Activated naive CD8-positive, alpha-beta T cell treated with anti-CD3 and anti-CD28 coated beads, Interleukin-2, amount 10 ng/mL, durations not matched to agents 7 days and 5 days (primary cell): ENCODE measurements at regions of chr7 and their contacts with region 1.

Region 1: DNA sequence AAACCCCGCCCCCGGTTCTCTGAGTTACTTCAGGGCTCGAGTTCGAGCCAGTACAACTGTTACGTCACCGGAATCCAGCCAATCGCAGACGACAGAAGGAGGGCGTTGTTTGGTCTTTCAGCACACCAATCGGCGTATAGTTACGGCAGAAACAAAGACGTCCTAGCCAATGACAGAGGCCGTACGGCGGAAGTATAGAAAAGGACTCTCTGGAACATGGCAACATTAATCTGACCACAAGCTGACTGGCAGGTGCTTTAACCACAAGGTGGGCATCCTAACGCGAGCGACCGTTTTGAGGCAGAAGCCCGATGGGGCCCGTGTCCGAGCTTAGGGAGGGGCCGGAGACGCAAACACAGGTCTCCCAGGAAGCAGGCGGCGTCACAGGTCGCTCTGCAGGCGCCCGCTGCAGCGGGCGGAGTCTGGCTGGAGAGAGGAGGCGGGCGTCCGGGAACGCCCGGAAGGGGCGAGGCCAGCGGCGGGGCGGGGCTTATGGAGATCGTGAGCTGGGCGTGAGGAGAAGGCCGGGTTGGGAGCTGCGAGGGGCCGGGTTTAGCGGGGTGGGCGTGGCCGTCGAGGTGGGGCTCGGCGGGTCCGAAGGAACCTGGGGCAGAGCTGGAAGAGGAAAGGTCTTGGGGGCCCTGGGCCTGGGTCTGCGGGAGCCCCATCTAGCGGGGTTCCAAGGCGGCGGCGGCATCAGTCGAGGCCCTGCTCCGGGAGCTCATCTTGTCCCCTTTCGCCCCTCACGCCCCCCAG is at the start of gene MOSPD3:
- DNase-seq: peak; percentile 100
- ATAC-seq: peak; percentile 93
- H3K4me3 Mint-ChIP-seq: peak within 1 kb of the TSS; percentile 98
- H3K27ac Mint-ChIP-seq: peak within 1 kb of the TSS; percentile 100
- H3K4me1 Mint-ChIP-seq: peaks cover 19% of the 10 kb centered on the region
- H3K27me3 Mint-ChIP-seq: peaks cover 7% of the 10 kb centered on the region
- total RNA-seq, gene MOSPD3: 27.4 TPM

Region 2: DNA sequence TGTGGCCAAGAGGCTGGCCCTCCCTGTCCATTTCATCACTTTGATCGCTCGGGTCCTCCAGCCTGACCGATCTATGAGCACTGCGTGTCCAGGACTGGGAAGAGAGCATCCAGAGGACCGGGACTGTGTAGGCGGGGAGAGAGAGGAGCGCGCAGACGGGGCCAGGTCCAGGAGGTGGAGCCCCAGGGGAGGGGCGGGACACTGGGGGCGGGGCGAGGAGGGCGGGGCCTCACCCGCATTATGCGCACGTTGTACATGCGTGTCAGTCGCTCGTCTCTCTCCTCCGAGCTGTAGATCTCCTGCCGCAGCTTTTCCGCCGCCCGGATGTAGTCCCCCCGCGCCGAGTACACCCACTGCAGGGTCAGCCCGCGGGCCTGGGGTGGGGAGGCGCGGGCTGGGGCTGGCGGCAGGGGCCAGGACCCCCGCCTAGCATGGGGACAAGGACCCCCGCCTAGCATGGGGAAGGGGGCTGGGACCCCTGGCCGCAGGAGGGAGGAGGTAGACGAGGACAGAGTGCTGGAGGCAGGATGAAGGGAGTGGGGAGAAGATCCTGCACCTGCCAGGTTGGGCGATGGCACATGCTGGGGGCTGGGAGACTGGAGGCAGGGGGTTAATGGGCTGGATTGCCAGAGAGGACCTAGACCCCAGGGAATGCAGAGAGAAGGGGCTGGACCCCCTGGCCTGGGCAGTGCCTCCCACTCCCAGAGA is 14.5 kb after region 1 on chr7:
- POLR2A ChIA-PET with region 1: interaction called, 29 read pairs
- DNase-seq: peak; percentile 84
- ATAC-seq: peak; percentile 98
- H3K4me3 Mint-ChIP-seq: peak overlapping the region; percentile 83
- H3K27ac Mint-ChIP-seq: peak overlapping the region; percentile 88
- H3K4me1 Mint-ChIP-seq: peaks cover 37% of the 10 kb centered on the region
- H3K27me3 Mint-ChIP-seq: no peaks in the 10 kb centered on the region

Region 3: GRCh38 chr7:100632951-100633717 is 21.0 kb after region 1 on chr7:
- POLR2A ChIA-PET with region 1: interaction called, 29 read pairs
- DNase-seq: peak; percentile 73
- ATAC-seq: peak; percentile 71
- H3K4me3 Mint-ChIP-seq: peak overlapping the region; percentile 87
- H3K27ac Mint-ChIP-seq: peak overlapping the region; percentile 87
- H3K4me1 Mint-ChIP-seq: peaks cover 31% of the 10 kb centered on the region
- H3K27me3 Mint-ChIP-seq: peaks cover 12% of the 10 kb centered on the region

Region 4: GRCh38 chr7:100824499-100825214 is 212.5 kb after region 1 on chr7:
- POLR2A ChIA-PET with region 1: no interaction called
- DNase-seq: no peak
- ATAC-seq: no peak
- H3K4me3 Mint-ChIP-seq: no peak overlapping the region
- H3K27ac Mint-ChIP-seq: no peak overlapping the region
- H3K4me1 Mint-ChIP-seq: peaks cover 16% of the 10 kb centered on the region
- H3K27me3 Mint-ChIP-seq: peaks cover 44% of the 10 kb centered on the region